ENCODE measurements at regions of chr14 and their contacts with region 1.

Region 1: DNA sequence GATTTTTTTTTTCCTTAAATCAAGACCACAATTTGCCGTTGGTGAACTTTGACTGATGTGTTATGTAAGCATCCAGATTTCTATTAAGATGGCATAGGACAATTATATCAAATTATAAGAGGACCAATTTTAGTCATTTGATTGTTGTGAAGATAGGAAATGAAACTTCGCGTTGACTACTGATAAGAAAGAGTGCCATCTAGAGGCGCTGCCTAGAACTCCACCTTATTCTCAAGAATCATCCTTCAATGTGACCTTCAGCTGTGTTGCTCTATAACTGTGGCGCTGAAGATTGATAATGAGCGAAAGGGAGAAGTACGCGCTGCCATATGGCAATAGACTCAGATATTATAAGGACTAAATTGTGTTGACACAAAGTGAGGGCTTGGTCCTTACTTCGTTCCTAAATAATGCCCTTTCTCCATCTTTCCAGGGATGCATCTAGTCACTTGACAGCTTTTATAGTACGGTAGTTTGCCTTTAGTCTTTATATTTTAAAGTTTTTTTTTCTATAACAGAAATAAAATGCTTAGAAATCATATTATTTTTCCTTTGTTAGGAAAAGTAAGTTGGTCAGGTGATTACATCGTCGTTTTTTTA is 350.8 kb upstream of the STXBP6 start:
- DNase-seq: peak in 1 of 2 experiments; percentile 54
- ATAC-seq: peak in 1 of 2 experiments; percentile 61; a peak in 2 of 6 replicates
- H3K4me3 ChIP-seq: no peak overlapping the region
- H3K27ac ChIP-seq: no peak overlapping the region
- H3K4me1 ChIP-seq: no peaks in the 10 kb centered on the region
- CTCF ChIP-seq: peak; percentile 53
- EP300 ChIP-seq: no peak
- POLR2A ChIP-seq: no peak
- RAD21 ChIP-seq: peak in 1 of 2 experiments; percentile 42; a peak in 1 of 5 replicates

Region 2: GRCh38 chr14:25411781-25412757 is 11.4 kb after region 1 on chr14:
- CTCF ChIA-PET with region 1: interaction called, 12 read pairs
- POLR2A ChIA-PET with region 1: no interaction called
- DNase-seq: peak in 1 of 2 experiments; percentile 5
- ATAC-seq: peak in 1 of 2 experiments; percentile 30; a peak in 1 of 6 replicates
- H3K4me3 ChIP-seq: no peak overlapping the region
- H3K27ac ChIP-seq: no peak overlapping the region
- H3K4me1 ChIP-seq: no peaks in the 10 kb centered on the region
- CTCF ChIP-seq: peak; percentile 31; the same call in 2 of the 3 replicates
- EP300 ChIP-seq: no peak
- POLR2A ChIP-seq: no peak
- RAD21 ChIP-seq: no peak

Region 3: DNA sequence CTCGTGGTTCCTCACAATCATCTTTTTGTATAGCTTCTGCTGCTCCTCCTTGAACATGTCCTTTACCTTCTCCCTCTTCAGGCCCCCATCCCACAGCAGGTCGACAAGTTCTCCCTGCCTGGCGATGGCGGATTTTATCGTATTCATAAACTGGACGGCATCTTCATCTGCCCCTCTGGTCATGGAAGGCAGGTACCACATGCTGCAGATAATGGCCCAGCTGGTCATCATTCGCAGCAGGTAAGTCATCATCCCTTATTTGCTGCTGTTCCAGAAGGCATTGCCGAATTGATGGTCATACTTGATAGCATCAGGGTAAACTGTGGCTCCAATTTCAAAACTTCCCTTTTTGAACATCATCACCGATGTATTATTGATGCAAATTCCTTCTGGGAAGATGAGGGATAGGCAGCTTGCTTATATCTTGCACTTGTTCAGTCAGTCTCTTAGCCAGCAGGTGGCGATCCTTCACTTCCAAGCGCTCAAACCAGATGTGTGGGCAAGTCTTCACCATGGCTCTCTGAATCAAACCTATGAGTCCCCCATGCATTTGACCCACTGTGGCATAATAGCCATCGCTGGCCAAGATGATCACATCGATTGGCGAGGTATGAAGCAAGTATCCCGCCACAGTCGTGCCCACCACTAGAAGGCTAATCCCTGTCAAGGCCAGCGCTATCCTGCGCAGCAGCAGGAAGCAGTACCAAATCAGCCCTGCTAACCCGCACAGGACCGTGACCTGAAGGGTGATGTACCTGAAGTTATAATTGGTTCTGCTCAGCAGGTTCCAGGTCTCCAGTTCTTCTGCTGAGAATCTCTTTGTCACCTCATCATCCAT is 30.7 kb after region 1 on chr14:
- CTCF ChIA-PET with region 1: no interaction called
- POLR2A ChIA-PET with region 1: no interaction called
- DNase-seq: peak in 1 of 2 experiments; percentile 50
- ATAC-seq: peak in 1 of 2 experiments; percentile 55; a peak in 2 of 6 replicates
- H3K4me3 ChIP-seq: no peak overlapping the region
- H3K27ac ChIP-seq: no peak overlapping the region
- H3K4me1 ChIP-seq: no peaks in the 10 kb centered on the region
- CTCF ChIP-seq: no peak
- EP300 ChIP-seq: no peak
- POLR2A ChIP-seq: no peak
- RAD21 ChIP-seq: peak in 1 of 2 experiments; percentile 41; a peak in 1 of 5 replicates

Region 4: GRCh38 chr14:25484235-25484634 is 83.5 kb after region 1 on chr14:
- CTCF ChIA-PET with region 1: no interaction called
- POLR2A ChIA-PET with region 1: no interaction called
- DNase-seq: no peak
- ATAC-seq: no peak
- H3K4me3 ChIP-seq: no peak overlapping the region
- H3K27ac ChIP-seq: no peak overlapping the region
- H3K4me1 ChIP-seq: no peaks in the 10 kb centered on the region
- CTCF ChIP-seq: no peak
- EP300 ChIP-seq: no peak
- POLR2A ChIP-seq: no peak
- RAD21 ChIP-seq: no peak

Region 5: DNA sequence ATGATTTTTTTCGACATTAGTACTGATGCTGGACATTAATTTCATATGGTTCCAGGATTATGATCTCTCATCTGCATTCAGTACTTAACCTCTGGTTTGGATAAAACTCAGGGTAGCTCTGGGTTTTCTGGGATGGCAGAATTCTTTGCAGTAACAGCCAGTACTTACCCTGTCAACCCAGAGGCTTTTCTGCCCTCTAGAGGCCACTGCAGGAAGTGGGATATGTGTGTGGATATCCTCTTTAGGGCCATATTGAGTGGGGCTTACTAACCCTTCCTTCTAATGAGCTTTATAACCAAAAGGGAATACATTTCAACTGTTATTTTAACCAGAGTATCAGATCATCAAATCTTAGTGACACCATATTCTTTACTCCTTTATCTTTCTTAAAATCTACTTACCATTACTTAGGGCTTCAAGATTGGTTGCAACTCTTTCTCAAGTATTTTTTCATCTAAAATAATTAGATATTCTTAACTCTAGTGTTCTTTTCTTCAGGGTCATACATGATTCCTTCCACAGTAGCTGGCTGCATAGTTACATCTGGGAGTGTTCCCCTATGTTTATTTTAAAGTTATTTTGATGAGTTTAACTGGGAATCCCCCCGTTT is 137.2 kb after region 1 on chr14:
- CTCF ChIA-PET with region 1: no interaction called
- POLR2A ChIA-PET with region 1: no interaction called
- DNase-seq: peak in 1 of 2 experiments; percentile 38
- ATAC-seq: peak in 1 of 2 experiments; percentile 65; a peak in 3 of 6 replicates
- H3K4me3 ChIP-seq: no peak overlapping the region
- H3K27ac ChIP-seq: no peak overlapping the region
- H3K4me1 ChIP-seq: no peaks in the 10 kb centered on the region
- CTCF ChIP-seq: no peak
- EP300 ChIP-seq: no peak
- POLR2A ChIP-seq: no peak
- RAD21 ChIP-seq: peak in 1 of 2 experiments; percentile 31; a peak in 1 of 5 replicates

Region 6: DNA sequence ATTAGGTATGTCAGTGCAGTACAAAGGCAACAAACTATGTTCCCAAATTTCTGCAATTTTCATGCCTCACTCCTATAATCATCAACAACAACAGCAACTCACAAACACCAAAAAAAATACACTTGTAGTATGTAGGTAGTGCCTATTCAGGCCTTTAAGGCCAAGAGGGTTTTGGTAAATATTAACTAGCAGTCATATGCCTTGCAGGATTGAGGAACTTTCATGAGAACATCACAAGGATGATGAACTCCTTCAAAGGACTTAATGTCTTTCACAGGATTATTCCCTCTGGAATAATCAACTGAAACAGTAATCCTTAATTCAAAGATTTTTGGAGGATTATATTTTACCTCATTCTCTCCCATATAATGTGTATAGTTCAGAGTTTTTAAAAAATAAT is 903.3 kb after region 1 on chr14:
- CTCF ChIA-PET with region 1: no interaction called
- POLR2A ChIA-PET with region 1: no interaction called
- DNase-seq: no peak
- ATAC-seq: no peak
- H3K4me3 ChIP-seq: no peak overlapping the region
- H3K27ac ChIP-seq: no peak overlapping the region
- H3K4me1 ChIP-seq: no peaks in the 10 kb centered on the region
- CTCF ChIP-seq: no peak
- EP300 ChIP-seq: no peak
- POLR2A ChIP-seq: no peak
- RAD21 ChIP-seq: no peak

Measured in A549 (cell line).